ENCODE measurements at regions of chr2 and their contacts with region 1.

Region 1: GRCh38 chr2:8296306-8296705 is 385.6 kb upstream of the ID2 start:
- DNase-seq: no peak
- H3K4me3 ChIP-seq: no peak overlapping the region
- H3K27ac ChIP-seq: no peak overlapping the region
- H3K4me1 ChIP-seq: no peaks in the 10 kb centered on the region
- H3K27me3 ChIP-seq: no peaks in the 10 kb centered on the region
- CTCF ChIP-seq: no peak

Region 2: DNA sequence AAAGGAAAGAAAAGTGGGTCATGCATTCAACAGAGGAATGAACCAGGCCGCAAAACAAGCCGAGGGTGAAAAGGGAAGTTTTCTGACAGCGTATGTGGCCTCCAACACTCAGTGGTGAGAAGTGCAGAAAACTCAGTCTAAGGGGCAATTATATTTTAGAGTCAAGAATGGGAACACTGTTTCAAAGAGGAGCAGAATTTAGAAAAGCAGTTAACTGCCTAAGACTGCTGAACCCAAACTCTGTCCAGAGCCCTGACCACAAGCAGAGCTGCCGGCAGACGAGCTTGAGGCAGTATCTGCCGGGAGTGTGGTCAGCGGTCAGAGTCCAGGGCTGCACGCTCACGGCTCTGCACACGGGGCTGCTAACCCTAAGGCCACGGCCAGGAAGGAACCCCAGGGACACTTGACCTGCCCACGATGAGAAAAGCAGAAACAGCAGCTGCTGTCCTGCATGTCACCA is 38.6 kb after region 1 on chr2:
- CTCF ChIA-PET with region 1: no interaction called
- POLR2A ChIA-PET with region 1: no interaction called
- intact Hi-C with region 1: loop called (anchors 2 kb)
- DNase-seq: no peak
- H3K4me3 ChIP-seq: no peak overlapping the region
- H3K27ac ChIP-seq: no peak overlapping the region
- H3K4me1 ChIP-seq: peaks cover 8% of the 10 kb centered on the region
- H3K27me3 ChIP-seq: no peaks in the 10 kb centered on the region
- CTCF ChIP-seq: no peak

Region 3: GRCh38 chr2:9415516-9416169 is 1119.3 kb after region 1 on chr2:
- CTCF ChIA-PET with region 1: no interaction called
- POLR2A ChIA-PET with region 1: no interaction called
- intact Hi-C with region 1: no loop called
- DNase-seq: no peak
- H3K4me3 ChIP-seq: no peak overlapping the region
- H3K27ac ChIP-seq: no peak overlapping the region
- H3K4me1 ChIP-seq: no peaks in the 10 kb centered on the region
- H3K27me3 ChIP-seq: no peaks in the 10 kb centered on the region
- CTCF ChIP-seq: no peak